ENCODE measurements at regions of chr19 and their contacts with region 1.

Region 1: DNA sequence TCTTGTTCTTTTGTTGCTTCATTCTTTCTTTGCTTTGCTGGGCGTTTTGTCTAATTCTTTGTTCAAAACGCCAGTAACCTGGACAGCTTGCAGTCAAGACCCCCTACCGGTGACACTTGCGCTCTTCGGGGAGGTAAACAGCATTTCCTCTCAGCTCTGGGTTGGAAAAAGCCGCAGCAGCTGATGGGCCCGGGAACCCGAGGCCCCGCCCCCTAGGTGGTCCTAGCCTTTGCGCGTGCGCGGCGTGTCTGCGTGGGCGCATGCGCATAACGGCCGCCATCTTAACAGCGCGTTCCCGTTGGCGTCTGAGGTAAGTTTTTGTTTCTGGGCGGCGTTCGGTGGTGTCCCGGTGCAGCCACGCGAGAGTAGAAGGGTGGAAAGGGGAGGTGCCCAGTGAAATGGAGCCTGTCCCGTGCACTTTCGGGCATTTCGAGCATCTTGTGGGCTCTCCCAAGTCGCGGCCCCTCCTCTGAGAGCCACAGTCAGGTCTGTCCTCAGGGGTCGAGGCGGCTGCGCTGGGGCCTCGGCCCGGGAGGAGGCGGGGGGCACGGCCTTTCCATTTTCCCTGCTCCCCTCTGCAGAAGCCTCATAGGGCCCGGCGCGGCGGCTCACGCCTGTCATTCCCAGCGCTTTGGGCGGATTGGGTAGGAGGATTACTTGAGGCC is at the start of gene ZNF559:
- DNase-seq: peak; percentile 98
- ATAC-seq: peak; percentile 89
- H3K4me3 ChIP-seq: peak within 1 kb of the TSS; percentile 72 to 88 (median 79)
- H3K4me3 Mint-ChIP-seq: peak within 1 kb of the TSS; percentile 96
- H3K27ac ChIP-seq: peak within 1 kb of the TSS; percentile 78 to 81
- H3K27ac Mint-ChIP-seq: peak within 1 kb of the TSS; percentile 96
- H3K4me1 ChIP-seq: peaks cover 11 to 17% of the 10 kb centered on the region in 2 donors
- H3K4me1 Mint-ChIP-seq: peaks cover 24% of the 10 kb centered on the region
- H3K27me3 ChIP-seq: no peaks in the 10 kb centered on the region
- H3K27me3 Mint-ChIP-seq: no peaks in the 10 kb centered on the region
- CTCF ChIP-seq: peak; percentile 59
- total RNA-seq, gene ZNF559: 49.3 and 60.9 TPM in 2 replicates

Region 2: DNA sequence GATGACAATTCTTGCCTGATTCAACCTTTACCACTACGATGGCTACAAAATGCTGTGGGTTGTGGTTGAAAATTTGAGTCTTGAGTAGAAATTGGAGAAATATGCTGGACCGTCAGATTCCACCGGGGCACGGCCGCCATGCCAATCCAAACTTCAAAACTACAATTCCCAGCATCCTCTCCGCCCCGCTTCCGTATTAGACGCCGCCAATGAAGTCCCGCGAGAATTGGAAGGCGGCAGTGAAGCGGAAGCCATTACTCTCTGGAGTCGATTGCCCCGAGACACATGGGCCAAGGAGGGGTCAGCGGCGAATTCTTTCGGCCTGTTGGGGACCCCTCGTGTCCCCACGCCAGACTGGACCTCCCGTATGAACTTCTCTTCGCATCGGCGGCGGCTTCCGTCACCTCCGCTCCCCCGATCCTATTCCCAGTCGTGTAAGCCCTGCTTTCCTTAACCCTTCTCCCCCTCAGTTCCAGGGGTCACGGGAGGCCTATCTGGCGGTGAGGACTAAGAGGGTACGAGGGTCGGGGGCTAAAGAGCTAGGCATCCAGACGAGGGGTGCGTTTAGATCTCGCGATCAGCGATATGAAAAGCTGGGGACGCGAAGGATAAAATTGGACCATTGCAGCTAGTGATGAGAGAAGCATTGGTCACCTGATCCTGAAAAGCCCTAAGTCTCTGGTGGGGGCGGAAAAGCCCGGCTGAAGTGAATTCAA is 183.7 kb before region 1 on chr19 and contains the start of gene ZNF317:
- CTCF ChIA-PET with region 1: no interaction called
- POLR2A ChIA-PET with region 1: no interaction called
- intact Hi-C with region 1: loop called (anchors 1 kb)
- DNase-seq: peak; percentile 94
- ATAC-seq: peak; percentile 90
- H3K4me3 ChIP-seq: peak within 1 kb of the TSS; percentile 70 to 99 (median 97)
- H3K4me3 Mint-ChIP-seq: peak within 1 kb of the TSS; percentile 98
- H3K27ac ChIP-seq: peak within 1 kb of the TSS; percentile 86 to 90
- H3K27ac Mint-ChIP-seq: peak within 1 kb of the TSS; percentile 97
- H3K4me1 ChIP-seq: peaks cover 13 to 15% of the 10 kb centered on the region in 2 donors
- H3K4me1 Mint-ChIP-seq: peaks cover 33% of the 10 kb centered on the region
- H3K27me3 ChIP-seq: no peaks in the 10 kb centered on the region
- H3K27me3 Mint-ChIP-seq: peaks cover 2% of the 10 kb centered on the region
- CTCF ChIP-seq: no peak
- total RNA-seq, gene ZNF317: 60.6 and 65.2 TPM in 2 replicates

Region 3: DNA sequence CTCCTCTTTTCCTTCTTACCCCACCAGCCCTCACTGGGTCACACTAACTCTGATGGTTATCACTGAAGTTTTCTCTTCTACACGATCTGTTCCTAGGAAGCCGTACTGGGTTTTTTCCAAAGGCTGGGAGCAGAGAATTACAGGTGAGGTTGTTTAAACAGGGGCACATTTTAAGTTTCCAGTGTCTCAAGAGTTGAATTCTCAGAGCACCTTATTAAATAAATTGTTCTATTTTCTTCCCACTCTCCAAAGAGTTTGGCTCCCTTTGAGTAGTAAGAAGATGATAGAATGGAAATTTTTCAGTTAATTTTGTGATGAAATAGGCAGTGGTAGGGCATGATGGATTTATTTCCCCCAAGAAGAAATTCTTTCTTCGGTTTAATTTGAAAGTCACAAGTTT is 104.6 kb before region 1 on chr19 and contains the start of gene OR7D4:
- CTCF ChIA-PET with region 1: no interaction called
- POLR2A ChIA-PET with region 1: no interaction called
- intact Hi-C with region 1: no loop called
- DNase-seq: no peak
- ATAC-seq: no peak
- H3K4me3 ChIP-seq: no peak within 1 kb of the TSS
- H3K4me3 Mint-ChIP-seq: no peak within 1 kb of the TSS
- H3K27ac ChIP-seq: no peak within 1 kb of the TSS
- H3K27ac Mint-ChIP-seq: no peak within 1 kb of the TSS
- H3K4me1 ChIP-seq: no peaks in the 10 kb centered on the region
- H3K4me1 Mint-ChIP-seq: no peaks in the 10 kb centered on the region
- H3K27me3 ChIP-seq: no peaks in the 10 kb centered on the region
- H3K27me3 Mint-ChIP-seq: peaks cover 18% of the 10 kb centered on the region
- CTCF ChIP-seq: no peak
- total RNA-seq, gene OR7D4: not detected in 2 replicates

Region 4: GRCh38 chr19:9538183-9539058 is 214.4 kb after region 1 on chr19 and contains the start of gene ZNF426:
- CTCF ChIA-PET with region 1: no interaction called
- POLR2A ChIA-PET with region 1: no interaction called
- intact Hi-C with region 1: loop called (anchors 5 kb)
- DNase-seq: peak; percentile 90
- ATAC-seq: peak; percentile 87
- H3K4me3 ChIP-seq: peak within 1 kb of the TSS; percentile 63 to 97 (median 77)
- H3K4me3 Mint-ChIP-seq: peak within 1 kb of the TSS; percentile 100
- H3K27ac ChIP-seq: peak within 1 kb of the TSS; percentile 80 to 88
- H3K27ac Mint-ChIP-seq: peak within 1 kb of the TSS; percentile 99
- H3K4me1 ChIP-seq: peaks cover 7 to 11% of the 10 kb centered on the region in 2 donors
- H3K4me1 Mint-ChIP-seq: peaks cover 25% of the 10 kb centered on the region
- H3K27me3 ChIP-seq: no peaks in the 10 kb centered on the region
- H3K27me3 Mint-ChIP-seq: no peaks in the 10 kb centered on the region
- CTCF ChIP-seq: no peak
- total RNA-seq, gene ZNF426: 22.1 and 22.3 TPM in 2 replicates

Measured in B cell (primary cell).